T-cell (primary cell): ENCODE measurements at regions of chr13 and their contacts with region 1.

Region 1: DNA sequence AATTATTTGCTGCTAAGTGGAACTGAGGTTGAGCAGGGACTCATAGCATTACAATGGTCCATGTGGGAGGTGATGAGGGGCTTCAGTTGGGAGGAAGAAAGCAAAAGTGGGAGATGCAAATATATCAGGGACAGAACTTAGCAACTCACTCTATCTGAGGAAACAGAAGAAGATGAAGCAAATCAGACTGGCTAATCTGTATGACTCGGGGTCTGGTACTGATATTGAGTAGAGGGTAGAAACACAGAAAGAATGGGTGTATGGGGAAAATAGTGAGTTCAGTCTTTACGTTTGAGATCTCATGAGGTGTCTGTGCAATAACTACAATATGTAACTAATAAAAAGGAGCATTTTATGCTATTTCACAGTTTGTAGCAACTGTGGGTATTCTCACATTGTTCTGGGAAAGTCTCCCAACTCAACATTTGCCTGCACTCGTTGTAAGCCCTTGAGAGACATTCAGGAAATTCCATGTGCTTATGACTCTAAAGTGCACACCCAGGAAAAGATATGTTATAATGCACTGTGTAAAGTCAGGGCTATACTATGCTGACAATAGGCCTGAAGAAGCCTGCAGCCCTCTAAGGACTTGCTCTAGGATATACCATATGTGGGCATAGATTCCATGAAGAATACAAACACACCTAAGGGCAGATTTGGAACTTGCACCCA is 183.5 kb downstream of the SPRY2 start:
- DNase-seq: no peak
- ATAC-seq: no peak
- H3K4me3 ChIP-seq: no peak overlapping the region
- H3K4me3 Mint-ChIP-seq: no peak overlapping the region
- H3K27ac ChIP-seq: no peak overlapping the region
- H3K27ac Mint-ChIP-seq: no peak overlapping the region
- H3K4me1 ChIP-seq: no peaks in the 10 kb centered on the region
- H3K4me1 Mint-ChIP-seq: no peaks in the 10 kb centered on the region
- H3K27me3 ChIP-seq: no peaks in the 10 kb centered on the region
- H3K27me3 Mint-ChIP-seq: no peaks in the 10 kb centered on the region

Region 2: DNA sequence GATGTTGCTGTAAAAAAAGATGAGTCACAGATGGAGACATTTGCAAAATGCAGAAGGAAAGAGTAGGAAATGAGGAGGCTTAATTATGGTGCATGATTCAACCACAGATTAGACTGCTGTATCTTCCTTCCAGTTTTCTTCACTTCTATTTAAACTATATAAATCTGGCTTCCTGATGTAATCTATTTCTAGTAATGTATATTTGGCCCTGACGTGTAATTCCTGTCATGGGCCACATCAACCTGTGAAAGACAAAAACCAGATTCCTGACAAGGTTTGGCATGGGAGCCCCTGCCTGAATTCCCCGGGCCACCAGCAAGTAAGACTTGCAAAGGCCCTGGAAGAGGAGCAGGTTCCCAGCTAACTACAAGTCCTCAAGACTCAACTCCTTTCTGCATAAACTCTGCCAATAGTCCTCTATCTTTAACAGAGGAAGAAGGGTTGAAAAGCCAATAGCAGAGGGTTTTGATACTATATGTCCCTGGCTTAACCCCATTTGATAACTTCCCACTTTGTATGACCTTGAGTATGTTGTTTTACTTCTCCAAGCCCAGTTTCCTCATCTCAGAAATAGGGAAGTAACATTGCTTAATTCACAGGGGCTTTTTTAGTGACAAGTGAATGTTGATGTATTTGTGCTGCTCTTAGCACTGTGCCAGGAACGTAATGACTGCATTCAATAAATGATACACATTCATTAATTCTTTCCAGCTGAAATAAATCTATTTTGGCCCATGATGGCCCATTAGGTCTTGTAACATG is 10.9 kb after region 1 on chr13:
- CTCF ChIA-PET with region 1: no interaction called
- POLR2A ChIA-PET with region 1: no interaction called
- DNase-seq: no peak
- ATAC-seq: no peak
- H3K4me3 ChIP-seq: no peak overlapping the region
- H3K4me3 Mint-ChIP-seq: no peak overlapping the region
- H3K27ac ChIP-seq: no peak overlapping the region
- H3K27ac Mint-ChIP-seq: no peak overlapping the region
- H3K4me1 ChIP-seq: peaks cover 0 to 3% of the 10 kb centered on the region in 2 experiments
- H3K4me1 Mint-ChIP-seq: peaks cover 0 to 5% (median 4%) of the 10 kb centered on the region in 3 donors
- H3K27me3 ChIP-seq: peaks cover 0 to 3% of the 10 kb centered on the region in 2 experiments
- H3K27me3 Mint-ChIP-seq: no peaks in the 10 kb centered on the region

Region 3: DNA sequence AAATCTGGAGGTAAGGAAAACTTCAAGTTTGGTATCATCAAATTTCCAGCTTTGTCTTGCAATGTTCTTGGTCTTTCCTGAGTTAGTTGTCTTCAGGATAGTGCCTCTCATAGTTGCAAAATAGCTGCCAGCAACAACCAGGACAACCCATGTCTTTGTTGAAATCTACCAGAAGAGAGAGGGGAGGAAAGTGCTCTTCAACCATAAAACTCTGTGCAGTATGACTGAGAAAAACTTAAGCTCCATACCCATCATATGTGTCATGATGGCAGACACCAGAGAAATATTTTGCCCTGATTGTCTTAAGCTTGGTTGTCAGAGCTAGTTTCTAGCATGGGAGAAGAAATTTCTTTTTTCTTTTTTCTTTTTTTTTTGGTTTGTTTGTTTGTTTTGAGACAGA is 80.2 kb after region 1 on chr13:
- CTCF ChIA-PET with region 1: no interaction called
- POLR2A ChIA-PET with region 1: interaction called in 1 of 2 experiments, 10 read pairs
- DNase-seq: no peak
- ATAC-seq: no peak
- H3K4me3 ChIP-seq: no peak overlapping the region
- H3K4me3 Mint-ChIP-seq: no peak overlapping the region
- H3K27ac ChIP-seq: no peak overlapping the region
- H3K27ac Mint-ChIP-seq: no peak overlapping the region
- H3K4me1 ChIP-seq: no peaks in the 10 kb centered on the region
- H3K4me1 Mint-ChIP-seq: no peaks in the 10 kb centered on the region
- H3K27me3 ChIP-seq: no peaks in the 10 kb centered on the region
- H3K27me3 Mint-ChIP-seq: peaks cover 0 to 3% of the 10 kb centered on the region in 2 donors